ENCODE measurements at regions of chrX and their contacts with region 1.

Region 1: DNA sequence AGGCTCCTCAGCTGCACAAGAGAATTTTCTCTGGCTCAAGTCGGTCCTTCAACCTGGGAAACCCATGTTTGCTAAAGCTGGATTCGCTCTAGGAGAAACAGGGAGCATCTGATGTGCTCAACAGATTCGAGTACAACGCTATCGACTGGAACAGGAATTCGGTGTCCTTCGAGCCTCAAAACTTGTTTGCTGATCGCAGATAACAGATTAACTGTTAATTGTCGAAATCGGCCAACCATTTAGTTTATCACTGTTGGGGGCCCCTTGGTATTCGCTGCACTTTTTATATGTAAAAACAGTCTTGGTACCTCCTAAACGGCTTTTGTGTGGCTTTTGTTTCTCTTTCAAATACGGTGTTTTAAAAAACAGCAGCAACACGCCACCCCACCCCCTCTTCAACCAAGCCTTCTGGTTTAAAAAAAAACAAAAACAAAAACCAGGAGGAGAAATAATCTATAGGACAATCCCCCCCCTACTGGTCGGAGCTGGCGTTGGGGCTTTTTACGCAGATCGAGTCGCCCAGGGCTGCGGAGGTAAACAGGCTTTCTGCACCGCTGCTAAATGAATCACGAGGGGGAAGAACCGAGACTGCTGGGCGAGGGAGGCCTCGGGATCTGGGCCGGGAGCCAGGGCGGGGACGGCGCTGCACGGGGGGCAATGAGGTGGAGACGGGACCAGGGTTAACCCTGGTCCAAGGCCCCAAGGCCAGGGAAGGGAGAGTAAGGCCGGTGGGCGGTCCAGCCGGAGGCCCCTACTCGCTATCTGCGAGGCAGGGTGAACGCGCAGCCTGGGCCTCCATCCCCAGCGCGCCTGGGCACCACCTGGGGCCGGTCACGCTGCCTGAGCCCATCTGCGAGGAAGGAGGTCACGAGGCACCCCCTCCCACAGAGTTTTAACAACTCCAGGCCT is 71.7 kb upstream of the BCOR start:
- DNase-seq: peak; percentile 61
- ATAC-seq: peak; percentile 70
- H3K4me3 ChIP-seq: peak overlapping the region in 1 of 2 experiments; percentile 32; a peak in 2 of 4 replicates
- H3K27ac ChIP-seq: peak overlapping the region; percentile 79
- H3K4me1 ChIP-seq: peaks cover 28% of the 10 kb centered on the region
- H3K27me3 ChIP-seq: no peaks in the 10 kb centered on the region
- CTCF ChIP-seq: peak; percentile 74

Region 2: GRCh38 chrX:40094041-40094899 is 75.2 kb before region 1 on chrX:
- CTCF ChIA-PET with region 1: no interaction called
- POLR2A ChIA-PET with region 1: interaction called, 4 read pairs
- in situ Hi-C with region 1: no loop called
- intact Hi-C with region 1: loop called (anchors 5 kb)
- DNase-seq: no peak
- ATAC-seq: no peak
- H3K4me3 ChIP-seq: peak overlapping the region; percentile 53 to 64
- H3K27ac ChIP-seq: peak overlapping the region; percentile 73; the same call in 1 of the 2 replicates
- H3K4me1 ChIP-seq: no peaks in the 10 kb centered on the region; the same call in 1 of the 2 replicates
- H3K27me3 ChIP-seq: no peaks in the 10 kb centered on the region
- CTCF ChIP-seq: no peak

Region 3: GRCh38 chrX:40266490-40267333 is 97.3 kb after region 1 on chrX:
- CTCF ChIA-PET with region 1: no interaction called
- POLR2A ChIA-PET with region 1: no interaction called
- in situ Hi-C with region 1: no loop called
- intact Hi-C with region 1: loop called (anchors 10 kb)
- DNase-seq: no peak
- ATAC-seq: peak; percentile 96
- H3K4me3 ChIP-seq: peak overlapping the region; percentile 39 to 53
- H3K27ac ChIP-seq: peak overlapping the region; percentile 61
- H3K4me1 ChIP-seq: peaks cover 4% of the 10 kb centered on the region
- H3K27me3 ChIP-seq: no peaks in the 10 kb centered on the region
- CTCF ChIP-seq: peak; percentile 85

Region 4: DNA sequence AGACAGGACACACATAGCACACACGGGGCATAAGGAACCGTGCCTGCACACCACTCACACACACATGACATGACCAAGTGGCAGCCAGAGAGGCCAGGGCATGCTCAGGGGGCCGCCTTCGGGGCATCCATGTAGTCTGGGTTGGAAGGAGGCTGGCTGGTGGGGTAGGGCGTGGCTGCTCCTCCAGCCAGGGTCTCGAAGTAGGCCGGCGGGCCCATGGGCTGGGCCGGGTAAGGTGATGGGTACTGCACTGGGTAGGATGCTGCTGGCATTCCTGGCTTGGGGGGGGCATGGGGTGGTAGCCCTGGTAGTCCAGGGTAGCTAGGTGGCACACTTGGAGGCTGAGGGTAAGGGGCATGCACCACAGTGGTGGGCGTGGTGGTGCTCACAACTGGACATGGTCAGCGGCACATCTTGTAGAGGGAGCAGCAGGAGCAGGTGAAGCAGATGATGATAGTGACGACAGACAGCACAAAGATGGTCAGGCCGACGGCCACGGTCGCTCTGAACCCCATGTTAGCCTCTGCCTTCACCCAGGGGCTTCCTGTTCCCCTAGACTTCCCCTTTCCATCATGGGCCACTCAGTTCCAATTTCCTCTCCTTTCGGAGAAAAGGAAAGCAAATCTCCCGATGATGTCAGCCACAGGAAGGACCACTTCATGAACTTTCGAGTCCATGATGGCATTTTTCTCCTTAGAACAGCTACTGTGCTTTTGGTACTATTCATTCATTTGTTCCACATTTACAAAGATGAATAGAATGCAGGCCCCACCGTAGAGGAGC is 1153.6 kb after region 1 on chrX:
- CTCF ChIA-PET with region 1: no interaction called
- POLR2A ChIA-PET with region 1: no interaction called
- in situ Hi-C with region 1: no loop called
- intact Hi-C with region 1: no loop called
- DNase-seq: no peak
- ATAC-seq: no peak
- H3K4me3 ChIP-seq: no peak overlapping the region
- H3K27ac ChIP-seq: no peak overlapping the region
- H3K4me1 ChIP-seq: no peaks in the 10 kb centered on the region
- H3K27me3 ChIP-seq: no peaks in the 10 kb centered on the region
- CTCF ChIP-seq: no peak

Measured in Panc1 (cell line).